ENCODE measurements at regions of chr18 and their contacts with region 1.

Region 1: DNA sequence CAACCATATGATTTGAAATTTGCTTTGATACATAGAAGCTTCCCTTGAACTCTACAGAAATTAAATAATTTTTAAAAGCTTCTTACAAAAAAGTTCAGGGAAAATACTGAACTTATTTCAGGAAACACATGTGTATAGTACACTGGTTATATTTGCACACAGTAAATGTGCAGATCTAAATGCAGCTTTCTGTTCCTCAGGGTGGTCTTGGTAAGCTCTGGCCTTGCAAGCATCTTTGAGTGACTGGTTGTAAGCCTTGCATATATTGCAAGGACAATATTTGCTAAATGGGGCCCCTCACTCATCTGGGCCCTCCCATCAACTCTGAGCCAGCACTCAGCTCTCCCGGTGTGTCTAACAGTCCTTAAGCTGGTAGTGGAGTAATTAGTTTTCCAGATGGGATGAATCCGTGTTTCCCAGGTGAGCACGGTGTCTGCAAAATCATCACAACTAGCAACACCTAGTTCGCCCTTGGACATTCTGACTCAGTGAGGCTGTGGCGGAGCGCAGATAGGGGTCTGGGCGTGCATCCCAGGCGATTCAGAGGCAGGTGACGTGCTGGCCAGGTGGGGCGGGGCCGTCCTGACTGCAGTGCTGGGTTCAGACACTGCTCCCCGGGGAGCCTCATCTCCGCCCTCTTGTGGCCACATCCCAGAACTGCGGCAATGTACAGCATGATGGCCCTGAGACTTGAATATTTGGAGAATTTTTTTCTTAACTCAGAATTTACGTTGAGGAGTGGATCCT is 149.6 kb downstream of the MBP start:
- DNase-seq: peak; percentile 91
- CTCF ChIP-seq: peak; percentile 92

Region 2: GRCh38 chr18:76658627-76659026 is 324.4 kb before region 1 on chr18:
- CTCF ChIA-PET with region 1: no interaction called
- POLR2A ChIA-PET with region 1: no interaction called
- DNase-seq: peak; percentile 43
- CTCF ChIP-seq: peak; percentile 18

Region 3: GRCh38 chr18:76905821-76906220 is 77.2 kb before region 1 on chr18:
- CTCF ChIA-PET with region 1: interaction called, 14 read pairs
- POLR2A ChIA-PET with region 1: no interaction called
- DNase-seq: no peak
- CTCF ChIP-seq: no peak

Region 4: DNA sequence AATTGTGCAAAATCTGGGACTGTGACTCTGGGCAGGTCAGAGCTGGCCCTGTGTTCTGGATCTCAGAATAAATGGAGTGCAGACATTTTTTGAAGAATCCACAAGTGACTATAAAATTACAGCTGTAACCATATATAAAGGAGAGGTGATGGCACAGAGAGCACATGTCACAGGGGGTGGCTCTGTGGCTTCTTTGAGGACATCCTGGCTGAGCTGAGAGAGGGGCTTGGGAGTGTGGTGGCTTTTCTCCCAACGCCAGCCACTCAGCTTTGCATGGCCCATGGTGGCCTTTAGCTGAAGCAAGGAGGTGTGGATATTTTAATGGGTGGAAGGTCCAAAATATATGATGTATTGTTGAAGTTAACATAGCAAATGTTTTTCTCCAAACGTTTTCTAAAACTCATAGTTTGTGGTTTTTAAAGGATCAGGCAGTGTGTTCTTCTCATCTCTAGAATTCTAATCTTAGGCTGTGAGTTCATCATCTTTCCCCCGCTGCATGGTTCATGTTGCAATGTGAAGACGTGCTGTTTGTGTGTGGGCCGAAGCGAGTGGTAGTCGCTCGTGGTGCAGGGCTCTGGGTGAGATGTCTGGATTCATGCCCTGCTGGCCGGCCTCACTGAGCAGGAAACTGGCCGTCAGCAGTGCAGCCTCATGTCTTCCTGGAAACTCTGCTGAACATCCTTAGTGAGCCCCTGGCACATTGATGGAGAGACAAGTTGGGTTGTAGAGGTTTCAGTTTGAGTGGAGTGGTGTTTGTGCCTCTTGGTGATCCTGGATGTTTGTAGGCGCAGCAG is 50.8 kb before region 1 on chr18:
- CTCF ChIA-PET with region 1: interaction called, 190 read pairs
- POLR2A ChIA-PET with region 1: no interaction called
- DNase-seq: no peak
- CTCF ChIP-seq: no peak

Region 5: DNA sequence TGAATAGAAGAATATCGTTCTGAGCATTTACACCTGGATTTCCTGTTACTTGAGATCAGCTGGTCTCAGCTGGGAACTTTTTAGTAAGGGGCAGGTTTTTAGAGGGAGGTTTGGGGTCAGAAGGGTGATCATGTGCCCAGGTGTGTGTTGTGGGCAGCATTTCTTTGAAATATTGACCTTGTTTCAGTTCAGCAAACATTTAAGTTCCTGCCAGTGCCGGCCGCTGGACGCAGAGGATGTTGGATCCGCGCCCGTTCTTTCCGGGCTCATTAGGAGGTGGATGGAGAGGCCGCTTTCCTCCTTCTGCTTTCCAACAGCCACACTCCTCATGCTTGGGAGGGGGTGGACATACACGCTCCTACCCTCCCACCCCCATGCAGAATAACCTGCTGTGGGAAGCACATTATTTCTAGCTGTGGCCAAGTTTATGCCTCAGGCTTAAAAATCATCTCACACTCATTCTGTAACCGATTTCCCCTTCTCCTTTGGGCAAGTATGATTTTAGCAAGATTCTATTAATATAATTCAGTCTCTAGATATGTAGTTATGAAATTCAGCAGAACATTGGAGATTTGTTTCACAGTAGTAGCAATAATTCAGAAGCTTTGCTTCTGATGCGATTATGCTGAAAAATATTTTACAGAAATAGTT is 29.3 kb before region 1 on chr18:
- CTCF ChIA-PET with region 1: interaction called, 30 read pairs
- POLR2A ChIA-PET with region 1: no interaction called
- DNase-seq: no peak
- CTCF ChIP-seq: no peak

Region 6: DNA sequence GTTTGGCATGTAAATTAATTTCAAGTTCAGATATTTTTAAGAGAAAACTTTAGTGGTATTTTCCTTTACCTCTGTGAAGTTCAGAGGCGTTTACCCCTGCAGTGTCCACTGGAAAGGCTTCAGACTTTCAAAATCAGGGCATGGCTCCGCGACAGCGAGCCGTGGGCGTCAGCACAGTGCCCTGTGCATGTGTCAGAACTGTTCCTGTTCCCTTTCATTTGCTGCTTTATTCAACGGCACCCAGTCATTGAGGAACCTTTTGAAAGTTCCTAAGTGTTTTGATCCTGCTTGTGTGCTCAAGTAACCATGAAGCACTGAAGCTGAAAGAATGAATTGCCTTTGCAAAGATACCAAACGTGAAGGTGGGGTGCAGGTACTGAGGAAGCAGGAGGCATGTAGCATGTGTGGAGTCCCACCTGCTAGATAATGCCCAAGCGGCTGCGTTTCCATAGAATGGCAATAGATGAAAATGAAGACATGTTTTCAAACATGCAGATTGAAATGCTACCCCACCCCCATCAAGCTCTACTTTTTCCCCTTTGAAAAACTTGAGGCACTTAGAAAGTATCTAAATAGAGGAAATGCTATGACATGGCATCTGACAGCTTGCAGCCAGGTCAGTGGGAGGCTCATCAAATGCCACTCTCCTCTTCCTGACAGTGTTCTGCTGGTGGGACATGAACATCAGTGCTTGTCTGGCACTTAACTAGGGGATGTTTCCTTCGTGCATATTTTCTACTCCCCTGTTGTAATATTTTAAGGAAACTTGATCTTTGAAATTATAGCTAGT is 12.0 kb before region 1 on chr18:
- CTCF ChIA-PET with region 1: interaction called, 40 read pairs
- POLR2A ChIA-PET with region 1: no interaction called
- DNase-seq: no peak
- CTCF ChIP-seq: no peak

Region 7: GRCh38 chr18:77054606-77055428 is 71.8 kb after region 1 on chr18:
- CTCF ChIA-PET with region 1: interaction called, 10 read pairs
- POLR2A ChIA-PET with region 1: no interaction called
- DNase-seq: peak; percentile 84
- CTCF ChIP-seq: peak; percentile 89

Region 8: DNA sequence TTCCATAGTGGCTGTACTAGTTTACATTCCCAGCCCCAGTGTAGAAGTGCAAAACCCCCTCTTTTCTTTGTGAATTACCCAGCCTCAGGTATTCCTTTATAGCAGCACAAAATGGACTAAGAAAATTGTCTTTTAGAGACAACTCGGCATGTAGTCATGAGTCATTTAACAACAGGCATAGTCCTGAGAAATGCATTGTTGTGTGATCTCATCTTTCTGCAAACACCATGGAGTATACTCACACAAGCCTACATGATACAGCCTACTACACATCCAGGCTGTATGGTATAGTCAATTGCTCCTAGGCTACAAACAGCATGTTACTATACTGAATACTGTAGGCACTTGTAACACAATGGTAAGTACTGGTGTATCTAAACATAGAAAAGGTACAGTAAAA is 194.0 kb after region 1 on chr18:
- CTCF ChIA-PET with region 1: no interaction called
- POLR2A ChIA-PET with region 1: no interaction called
- DNase-seq: no peak
- CTCF ChIP-seq: no peak

Measured in GM10248 (cell line).